ENCODE measurements at regions of chr17 and their contacts with region 1.

Region 1: DNA sequence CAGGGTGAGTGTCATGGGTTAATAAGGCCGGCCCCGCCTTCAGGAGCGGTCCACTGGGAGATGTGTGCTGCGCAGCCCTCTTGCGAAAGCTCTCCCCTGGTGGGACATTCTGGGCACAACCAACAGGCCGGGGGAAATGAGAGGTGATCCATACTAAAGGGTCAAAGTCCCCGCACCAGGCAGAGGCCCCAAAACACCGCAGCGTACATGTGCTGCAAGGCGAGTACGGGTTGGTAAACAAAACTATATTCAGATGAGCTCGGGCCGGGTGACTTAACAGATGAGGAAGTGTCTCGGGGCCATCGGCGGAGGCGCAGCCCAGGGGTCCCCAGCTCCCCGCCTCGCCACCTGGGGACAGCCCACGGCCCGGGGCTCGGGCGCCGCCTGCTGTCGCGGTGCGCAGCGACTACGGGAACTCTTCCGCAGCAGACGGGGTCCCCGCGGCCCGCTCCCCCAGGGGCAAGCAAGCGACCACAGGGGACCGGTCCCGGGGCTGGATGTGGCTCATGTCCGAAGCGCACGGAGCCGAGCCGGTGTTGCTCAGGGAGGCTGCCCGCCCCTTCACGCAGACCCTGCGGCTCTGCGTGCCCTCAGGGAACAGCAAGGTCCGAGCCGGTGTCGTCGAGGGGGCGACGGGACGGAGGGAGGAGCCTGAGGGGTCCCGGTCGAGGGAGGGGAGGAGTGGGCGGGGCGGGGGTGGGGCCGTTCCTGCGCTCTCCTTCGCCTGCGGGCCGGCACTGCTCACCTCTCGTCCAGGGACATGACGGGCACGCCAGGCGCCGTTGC is at the start of gene RAB37:
- DNase-seq: peak in 3 of 10 donors; percentile 61 to 83 (median 66)

Region 2: GRCh38 chr17:74601944-74602572 is 134.6 kb before region 1 on chr17:
- intact Hi-C with region 1: no loop called
- DNase-seq: peak in 2 of 10 donors; percentile 28 to 65

Region 3: GRCh38 chr17:74659898-74660297 is 76.8 kb before region 1 on chr17:
- intact Hi-C with region 1: loop called (anchors 2 kb)
- DNase-seq: no peak

Measured in posterior cingulate gyrus (tissue), 11 donors.